Activated T-helper 2 cell treated with anti-CD3 and anti-CD28 coated beads, Interferon-gamma antibody, Interleukin-2, Interleukin-4, amounts not matched to agents 10 μg/mL and 5 μg/mL and 100 μg/mL, durations not matched to agents 14 hours and 24 hours and 36 hours (primary cell): ENCODE measurements at regions of chr11 and their contacts with region 1.

Region 1: GRCh38 chr11:47766305-47767227 is 575 bp downstream of the FNBP4 start:
- DNase-seq: peak; percentile 75
- H3K4me3 Mint-ChIP-seq: peak overlapping the region; percentile 99
- H3K27ac Mint-ChIP-seq: peak overlapping the region; percentile 99
- H3K4me1 Mint-ChIP-seq: peaks cover 14% of the 10 kb centered on the region
- H3K27me3 Mint-ChIP-seq: no peaks in the 10 kb centered on the region

Region 2: DNA sequence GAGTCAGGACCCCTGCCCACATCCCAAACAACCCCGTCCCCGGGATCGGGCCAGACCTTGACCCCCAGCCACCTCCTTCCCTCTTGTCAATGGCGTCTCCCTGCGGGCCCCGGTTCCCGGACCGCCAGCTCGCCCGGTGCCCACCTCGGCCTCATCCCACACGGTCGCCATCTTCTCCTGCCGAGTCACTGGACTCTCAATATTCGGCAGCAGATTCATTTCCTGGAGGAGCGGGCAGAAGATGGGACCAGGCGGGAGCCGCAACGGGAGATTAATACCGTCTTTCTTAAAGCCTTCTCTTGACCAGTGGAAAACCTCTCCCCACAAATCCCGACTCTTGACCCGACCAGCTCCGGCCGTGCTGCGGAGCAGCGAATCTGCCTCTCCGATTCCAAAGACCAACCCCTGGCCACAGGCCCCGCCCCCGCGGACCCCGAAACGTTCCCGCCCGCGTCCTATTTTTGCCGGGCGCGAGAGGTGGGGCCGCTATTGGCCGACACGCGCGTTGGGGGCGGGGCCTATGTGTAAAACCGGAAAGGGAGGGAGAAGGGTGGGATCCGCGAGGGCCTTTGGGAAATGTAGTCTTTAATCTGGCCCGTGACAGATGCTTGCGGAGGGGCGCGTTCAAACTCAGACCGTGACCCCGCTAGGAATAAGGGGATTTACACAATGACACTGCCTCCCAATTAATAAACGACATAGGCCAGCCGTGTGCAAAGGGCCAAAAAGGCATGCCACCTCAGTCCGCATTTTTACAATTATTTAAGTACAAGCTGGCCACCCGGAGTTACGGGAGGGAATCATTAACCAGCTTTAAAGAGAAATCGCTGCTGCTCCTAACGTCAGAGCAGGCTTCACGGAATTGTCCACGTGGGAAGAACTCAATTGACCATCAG is 340.3 kb before region 1 on chr11 and contains the start of gene PSMC3:
- intact Hi-C with region 1: loop called (anchors 10 kb)
- DNase-seq: peak; percentile 96
- H3K4me3 Mint-ChIP-seq: peak within 1 kb of the TSS; percentile 99
- H3K27ac Mint-ChIP-seq: peak within 1 kb of the TSS; percentile 99
- H3K4me1 Mint-ChIP-seq: peaks cover 20% of the 10 kb centered on the region
- H3K27me3 Mint-ChIP-seq: no peaks in the 10 kb centered on the region
- total RNA-seq, gene PSMC3: 214 and 219 TPM in 2 replicates

Region 3: DNA sequence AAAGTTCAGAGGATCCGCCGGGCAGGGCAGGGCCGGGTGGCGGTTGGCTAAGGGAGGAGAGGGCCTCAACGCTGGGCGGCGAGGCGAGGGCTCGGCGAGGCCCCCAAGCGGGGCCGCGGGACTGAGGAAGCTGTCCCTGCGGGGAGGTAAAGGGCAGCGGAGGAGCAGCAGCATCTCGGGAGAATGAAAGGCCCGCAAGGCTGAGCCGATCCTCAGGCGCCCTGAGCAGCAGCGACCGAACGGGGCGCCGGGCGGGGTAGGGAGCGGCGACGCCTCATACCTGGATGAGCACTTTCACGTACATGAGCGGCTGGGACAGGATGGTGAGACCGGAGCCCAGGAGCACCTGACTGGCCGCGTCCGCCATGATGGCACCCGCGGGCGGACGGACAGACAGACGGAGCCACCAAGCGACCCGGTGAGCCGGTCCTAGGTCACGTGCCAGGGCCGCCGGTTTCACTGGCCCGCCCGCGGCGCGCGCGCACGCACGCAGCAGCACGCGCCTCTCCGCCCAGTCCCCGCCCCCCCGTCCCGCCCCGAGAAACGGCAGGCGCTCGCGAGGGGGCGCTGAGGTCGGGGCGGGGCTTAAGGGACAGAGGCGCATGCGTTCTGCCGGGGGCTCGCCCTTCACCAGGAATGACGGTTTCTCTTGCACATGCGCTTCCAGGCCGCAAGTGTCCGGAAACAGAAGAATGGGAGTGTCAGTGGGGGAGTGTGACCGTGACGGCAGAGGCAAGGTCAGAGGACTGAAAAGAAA is 124.3 kb before region 1 on chr11 and contains the start of gene MTCH2:
- intact Hi-C with region 1: loop called (anchors 1 kb)
- DNase-seq: peak; percentile 95
- H3K4me3 Mint-ChIP-seq: peak within 1 kb of the TSS; percentile 99
- H3K27ac Mint-ChIP-seq: peak within 1 kb of the TSS; percentile 95
- H3K4me1 Mint-ChIP-seq: peaks cover 27% of the 10 kb centered on the region
- H3K27me3 Mint-ChIP-seq: no peaks in the 10 kb centered on the region
- total RNA-seq, gene MTCH2: 124 and 131 TPM in 2 replicates

Region 4: DNA sequence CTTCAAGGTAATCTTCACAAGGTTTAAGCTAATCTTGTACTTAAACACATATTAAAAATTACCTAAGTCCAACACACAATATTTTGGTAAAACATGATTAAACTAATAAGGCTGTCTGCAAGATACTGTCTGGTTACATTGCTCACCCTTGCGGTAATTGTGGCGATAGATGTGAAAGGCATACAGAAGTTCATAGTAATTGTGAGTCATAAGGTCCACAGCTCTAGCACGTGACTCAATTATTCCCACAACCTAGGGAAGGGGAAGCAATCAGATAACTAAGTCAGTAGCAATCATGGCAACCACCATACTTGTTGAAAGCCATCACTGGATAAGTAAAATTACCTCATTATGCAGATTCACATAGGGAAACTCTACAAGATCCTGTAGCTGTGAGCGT is 31.1 kb after region 1 on chr11:
- intact Hi-C with region 1: loop called (anchors 1 kb)
- DNase-seq: peak; percentile 19
- H3K4me3 Mint-ChIP-seq: no peak overlapping the region
- H3K27ac Mint-ChIP-seq: peak overlapping the region; percentile 82
- H3K4me1 Mint-ChIP-seq: peaks cover 14% of the 10 kb centered on the region
- H3K27me3 Mint-ChIP-seq: no peaks in the 10 kb centered on the region

Region 5: GRCh38 chr11:47819743-47820142 is 53.2 kb after region 1 on chr11:
- intact Hi-C with region 1: no loop called
- DNase-seq: no peak
- H3K4me3 Mint-ChIP-seq: no peak overlapping the region
- H3K27ac Mint-ChIP-seq: no peak overlapping the region
- H3K4me1 Mint-ChIP-seq: no peaks in the 10 kb centered on the region
- H3K27me3 Mint-ChIP-seq: no peaks in the 10 kb centered on the region

Region 6: DNA sequence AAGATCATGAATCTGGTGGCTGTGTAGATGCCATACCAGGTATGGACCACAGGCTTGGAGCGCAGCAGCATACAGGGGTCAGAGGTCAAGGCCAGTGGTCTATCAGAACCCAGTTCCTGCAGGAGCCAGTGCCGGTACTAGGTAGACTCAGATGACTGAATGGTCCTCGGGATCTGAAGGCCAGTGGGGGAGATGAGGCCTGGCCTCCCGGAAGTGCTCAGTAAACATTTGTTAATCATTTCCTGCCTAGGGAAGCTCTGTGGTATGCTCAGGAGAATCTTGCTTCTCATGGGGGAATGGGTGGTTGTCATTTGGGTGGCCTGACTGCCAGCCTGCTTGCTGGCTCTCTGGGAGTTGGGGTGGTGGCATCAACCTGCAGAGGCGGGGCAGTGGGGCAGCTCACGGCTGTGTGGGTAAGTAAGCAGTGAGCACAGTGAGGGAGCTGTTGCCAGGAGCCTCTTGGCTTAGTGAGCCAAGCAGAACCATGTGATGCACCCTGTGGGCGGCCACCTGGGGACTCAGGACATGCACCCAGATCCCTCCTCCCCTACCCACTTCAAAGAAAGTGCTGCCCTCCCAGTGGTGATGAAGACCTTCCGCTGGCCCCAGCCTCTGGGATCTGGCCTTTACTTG is 246.8 kb after region 1 on chr11:
- intact Hi-C with region 1: loop called (anchors 5 kb)
- DNase-seq: no peak
- H3K4me3 Mint-ChIP-seq: peak overlapping the region; percentile 61
- H3K27ac Mint-ChIP-seq: peak overlapping the region; percentile 97
- H3K4me1 Mint-ChIP-seq: peaks cover 82% of the 10 kb centered on the region
- H3K27me3 Mint-ChIP-seq: no peaks in the 10 kb centered on the region